Transverse colon (tissue), 4 donors: ENCODE measurements at regions of chr22 and their contacts with region 1.

Region 1: GRCh38 chr22:23539135-23539838 is 40.8 kb downstream of the IGLL1 start:
- DNase-seq: peak; percentile 87
- H3K4me3 ChIP-seq: peak overlapping the region in 1 of 4 donors; percentile 37
- H3K27ac ChIP-seq: peak overlapping the region in 2 of 4 donors; percentile 13 to 22
- H3K4me1 ChIP-seq: peaks cover 7 to 48% (median 21%) of the 10 kb centered on the region in 4 donors
- H3K27me3 ChIP-seq: no peaks in the 10 kb centered on the region
- CTCF ChIP-seq: peak; percentile 81 to 98 (median 89)
- EP300 ChIP-seq: no peak
- POLR2A ChIP-seq: no peak

Region 2: GRCh38 chr22:23077627-23078461 is 461.4 kb before region 1 on chr22:
- in situ Hi-C with region 1: no loop called
- intact Hi-C with region 1: no loop called
- DNase-seq: no peak
- H3K4me3 ChIP-seq: no peak overlapping the region
- H3K27ac ChIP-seq: no peak overlapping the region
- H3K4me1 ChIP-seq: no peaks in the 10 kb centered on the region
- H3K27me3 ChIP-seq: no peaks in the 10 kb centered on the region
- CTCF ChIP-seq: no peak
- EP300 ChIP-seq: no peak
- POLR2A ChIP-seq: no peak

Region 3: DNA sequence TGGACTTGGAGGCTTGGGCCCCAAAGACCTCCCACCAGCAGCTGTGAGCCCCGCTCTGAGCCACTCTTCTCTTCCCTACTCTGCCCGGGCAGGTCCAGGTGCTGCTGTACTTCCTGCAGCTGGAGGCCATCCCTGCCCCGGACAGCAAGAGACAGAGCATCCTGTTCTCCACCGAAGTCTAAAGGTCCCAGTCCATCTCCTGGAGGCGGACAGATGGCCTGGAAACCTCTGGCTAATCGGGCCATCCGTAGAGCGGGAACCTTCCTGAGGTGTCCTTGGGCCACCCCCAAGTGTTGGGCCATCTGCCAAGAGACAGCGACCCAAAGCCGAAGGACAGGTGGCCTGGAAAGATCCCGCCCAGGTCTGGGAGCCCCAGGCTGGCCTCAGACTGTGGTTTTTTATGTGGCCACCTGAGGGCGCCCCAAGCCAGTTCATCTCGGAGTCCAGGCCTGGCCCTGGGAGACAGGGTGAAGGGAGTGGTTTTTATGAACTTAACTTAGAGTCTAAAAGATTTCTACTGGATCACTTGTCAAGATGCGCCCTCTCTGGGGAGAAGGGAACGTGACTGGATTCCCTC is 223.9 kb before region 1 on chr22:
- in situ Hi-C with region 1: loop called in 1 of 4 experiments (anchors 25 kb)
- intact Hi-C with region 1: no loop called
- DNase-seq: peak; percentile 78
- H3K4me3 ChIP-seq: no peak overlapping the region
- H3K27ac ChIP-seq: no peak overlapping the region
- H3K4me1 ChIP-seq: no peaks in the 10 kb centered on the region
- H3K27me3 ChIP-seq: no peaks in the 10 kb centered on the region
- CTCF ChIP-seq: peak; percentile 56 to 78 (median 75)
- EP300 ChIP-seq: no peak
- POLR2A ChIP-seq: no peak

Region 4: DNA sequence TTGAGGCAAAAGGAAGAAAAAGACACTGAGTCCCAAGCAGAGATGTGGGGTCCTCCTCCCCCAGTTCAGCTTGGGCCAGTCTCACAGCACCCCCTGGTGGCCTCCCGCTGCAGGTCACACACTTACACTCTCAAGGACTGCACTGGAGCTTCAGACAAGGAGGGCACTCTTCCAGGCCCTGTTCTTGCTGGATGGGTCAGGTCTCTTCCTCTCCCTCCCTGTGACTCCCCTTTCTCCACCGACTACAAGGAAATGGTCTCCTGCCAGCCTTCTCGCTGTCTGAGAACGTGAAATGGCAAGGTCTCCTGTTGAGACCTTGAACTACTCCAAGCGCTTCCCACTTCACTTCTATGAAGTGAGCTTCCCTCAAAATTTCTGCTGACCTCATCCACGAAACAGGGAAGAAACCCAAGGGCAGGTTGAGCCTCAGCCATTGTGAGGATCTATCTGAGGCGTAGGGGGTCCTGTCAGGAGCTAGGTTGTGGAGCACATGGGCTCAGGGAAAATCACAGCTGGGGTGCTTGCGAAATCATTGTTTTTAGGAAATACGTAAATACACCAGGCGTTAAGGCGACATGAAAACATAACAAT is 52.0 kb after region 1 on chr22:
- in situ Hi-C with region 1: loop called in 1 of 4 experiments (anchors 10 kb)
- intact Hi-C with region 1: no loop called
- DNase-seq: peak; percentile 50
- H3K4me3 ChIP-seq: no peak overlapping the region
- H3K27ac ChIP-seq: no peak overlapping the region
- H3K4me1 ChIP-seq: no peaks in the 10 kb centered on the region
- H3K27me3 ChIP-seq: no peaks in the 10 kb centered on the region
- CTCF ChIP-seq: peak; percentile 62 to 79 (median 75)
- EP300 ChIP-seq: no peak
- POLR2A ChIP-seq: no peak

Region 5: DNA sequence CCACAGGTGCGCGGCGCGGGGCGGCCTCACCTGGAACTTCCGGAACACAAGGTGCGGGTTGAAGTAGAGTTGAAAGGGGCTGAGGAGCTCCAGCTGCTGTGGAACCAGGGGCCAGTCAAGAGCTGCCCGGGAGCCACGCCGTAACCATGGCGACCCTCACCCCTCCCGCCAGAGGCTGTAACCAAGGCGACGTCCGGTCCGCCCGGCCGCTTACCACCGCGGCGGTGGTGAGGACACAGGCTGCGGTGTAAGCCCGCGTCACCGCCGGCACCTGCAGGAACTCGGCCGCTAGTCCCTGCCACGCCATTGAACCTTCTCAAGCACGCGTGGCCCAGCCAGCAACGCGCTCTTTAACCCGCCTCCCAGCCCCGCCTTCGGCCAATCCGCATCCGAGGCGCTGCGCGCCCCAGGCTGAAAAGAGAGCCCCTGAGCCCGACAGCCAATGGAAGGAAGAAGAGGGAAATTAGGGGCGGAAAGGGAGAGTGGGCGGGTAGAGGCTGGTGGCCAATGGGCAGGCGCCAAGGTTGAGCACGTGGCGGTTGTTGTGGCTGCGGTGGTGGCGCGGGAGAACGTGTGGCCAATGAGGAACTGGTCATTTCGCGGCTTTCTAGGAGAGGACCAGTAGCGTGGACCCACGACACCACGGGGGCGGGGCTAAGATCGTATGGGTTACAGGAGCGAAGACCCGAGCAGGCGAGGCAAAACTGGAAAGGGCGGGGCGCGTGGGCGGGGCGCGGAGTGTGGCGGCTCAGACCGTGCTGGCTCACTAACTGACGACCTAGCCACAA is 299.6 kb after region 1 on chr22 and contains the start of gene DERL3:
- in situ Hi-C with region 1: loop called in 1 of 4 experiments (anchors 25 kb)
- intact Hi-C with region 1: no loop called
- DNase-seq: peak; percentile 99
- H3K4me3 ChIP-seq: peak within 1 kb of the TSS in 3 of 4 donors; percentile 31 to 57 (median 33)
- H3K27ac ChIP-seq: peak within 1 kb of the TSS; percentile 7 to 69 (median 40)
- H3K4me1 ChIP-seq: peaks cover 13 to 18% (median 16%) of the 10 kb centered on the region in 4 donors
- H3K27me3 ChIP-seq: no peaks in the 10 kb centered on the region
- CTCF ChIP-seq: no peak
- EP300 ChIP-seq: no peak
- POLR2A ChIP-seq: no peak
- total RNA-seq, gene DERL3: 1.9 to 20.0 (median 3.1) TPM